ENCODE measurements at regions of chr1 and their contacts with region 1.

Region 1: GRCh38 chr1:236281654-236282424 is at the start of gene ERO1B:
- DNase-seq: peak; percentile 95
- H3K4me3 Mint-ChIP-seq: peak within 1 kb of the TSS; percentile 91
- H3K27ac Mint-ChIP-seq: peak within 1 kb of the TSS; percentile 66
- H3K4me1 Mint-ChIP-seq: peaks cover 41% of the 10 kb centered on the region
- H3K27me3 Mint-ChIP-seq: no peaks in the 10 kb centered on the region
- total RNA-seq, gene ERO1B: 1.6 to 2.5 TPM

Region 2: DNA sequence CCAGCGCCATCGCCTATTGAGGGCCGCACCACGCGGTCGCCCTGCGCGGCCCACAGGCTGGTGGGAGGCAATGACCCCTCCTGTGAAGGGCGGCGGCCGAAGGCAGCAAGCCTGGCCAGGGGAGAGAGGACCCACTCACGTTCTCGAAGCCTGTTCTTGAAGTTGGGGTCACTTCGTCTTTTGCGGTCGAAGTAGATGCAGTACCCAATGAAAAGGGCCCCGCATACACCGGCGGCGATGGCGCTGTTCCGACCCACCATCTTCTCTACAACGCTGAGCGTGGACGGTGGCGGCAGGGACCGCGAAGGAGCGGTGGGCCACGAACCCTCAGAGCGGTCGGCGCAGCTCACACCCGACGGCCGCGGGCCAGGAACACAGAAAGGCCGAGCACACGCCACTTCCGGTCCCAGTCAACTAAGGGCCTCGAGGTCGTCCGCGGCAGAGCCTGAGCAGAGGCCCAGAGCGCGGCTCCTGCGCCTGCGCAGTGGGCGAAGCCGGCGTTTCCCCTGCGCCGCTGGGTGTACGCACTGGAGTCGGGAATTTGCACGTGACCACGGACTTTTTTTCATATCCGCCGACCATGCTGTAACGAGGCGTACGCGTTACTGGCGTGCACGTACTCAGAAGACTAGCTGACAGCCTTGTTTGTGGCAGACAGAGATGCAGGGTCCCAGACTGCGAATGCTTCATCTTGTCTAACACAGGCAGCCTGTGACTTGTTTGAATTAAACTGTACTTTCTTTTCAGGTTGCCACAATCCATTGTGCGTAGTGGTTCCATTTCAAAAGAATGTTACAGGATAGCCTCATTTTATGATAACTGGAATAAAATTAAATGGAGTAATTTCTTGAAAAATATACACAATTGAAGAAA is 1153.1 kb before region 1 on chr1 and contains the start of gene TOMM20:
- CTCF ChIA-PET with region 1: no interaction called
- intact Hi-C with region 1: loop called (anchors 5 kb)
- DNase-seq: peak; percentile 98
- H3K4me3 Mint-ChIP-seq: peak within 1 kb of the TSS; percentile 96
- H3K27ac Mint-ChIP-seq: peak within 1 kb of the TSS; percentile 94
- H3K4me1 Mint-ChIP-seq: peaks cover 38% of the 10 kb centered on the region
- H3K27me3 Mint-ChIP-seq: no peaks in the 10 kb centered on the region
- total RNA-seq, gene TOMM20: 155 to 192 TPM

Region 3: DNA sequence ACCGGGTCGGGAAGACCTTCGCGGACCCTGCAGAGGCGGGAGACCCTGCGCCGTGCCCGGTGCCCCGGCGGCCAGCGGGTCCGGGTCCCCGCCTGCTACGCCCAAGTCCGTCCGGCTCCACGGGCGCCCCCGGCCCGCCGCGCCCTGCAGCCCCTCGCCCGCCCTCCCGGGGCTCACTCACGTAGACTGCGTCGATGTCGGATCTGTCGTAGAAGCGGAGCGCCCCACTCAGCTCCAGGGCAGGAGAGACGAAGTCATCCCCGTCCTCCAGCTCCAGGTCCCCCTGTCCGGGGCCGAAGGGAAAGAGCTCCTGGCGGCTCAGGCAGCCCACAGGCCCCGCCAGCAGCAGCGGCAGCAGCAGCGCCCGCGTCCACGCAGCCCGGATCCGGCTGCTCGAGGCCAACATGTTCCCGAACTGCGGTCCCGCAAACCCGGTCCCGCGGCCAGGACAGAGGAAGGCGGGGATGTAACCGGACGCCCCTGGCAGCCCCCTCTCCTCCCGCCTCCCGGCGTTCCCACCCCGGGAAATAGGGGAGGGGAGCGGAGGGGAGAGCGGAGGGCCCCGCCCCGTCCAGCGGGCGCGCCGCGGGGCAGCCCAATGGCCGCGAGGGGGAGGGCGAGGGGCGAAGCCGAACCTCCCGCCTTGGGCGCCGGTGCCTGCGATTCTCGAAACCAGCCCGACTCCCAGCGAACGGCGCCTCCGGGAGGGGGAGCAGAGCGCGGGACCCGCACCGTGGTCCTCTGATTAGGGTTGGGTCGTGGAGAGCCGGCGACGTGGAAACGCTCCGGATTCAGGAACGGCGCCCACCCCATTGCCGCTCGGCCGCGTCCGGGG is 216.9 kb before region 1 on chr1 and contains the start of gene NID1:
- CTCF ChIA-PET with region 1: no interaction called
- intact Hi-C with region 1: loop called (anchors 1 kb)
- DNase-seq: peak; percentile 25
- H3K4me3 Mint-ChIP-seq: peak within 1 kb of the TSS; percentile 63
- H3K27ac Mint-ChIP-seq: no peak within 1 kb of the TSS
- H3K4me1 Mint-ChIP-seq: peaks cover 26% of the 10 kb centered on the region
- H3K27me3 Mint-ChIP-seq: peaks cover 38% of the 10 kb centered on the region
- total RNA-seq, gene NID1: 0.10 TPM in 1 of 2 experiments, not detected in the other

Region 4: GRCh38 chr1:236120721-236121153 is 161.1 kb before region 1 on chr1:
- CTCF ChIA-PET with region 1: no interaction called
- intact Hi-C with region 1: loop called (anchors 1 kb)
- DNase-seq: peak; percentile 33
- H3K4me3 Mint-ChIP-seq: no peak overlapping the region
- H3K27ac Mint-ChIP-seq: no peak overlapping the region
- H3K4me1 Mint-ChIP-seq: peaks cover 28% of the 10 kb centered on the region
- H3K27me3 Mint-ChIP-seq: no peaks in the 10 kb centered on the region

Region 5: GRCh38 chr1:236214761-236215160 is 67.1 kb before region 1 on chr1:
- CTCF ChIA-PET with region 1: no interaction called
- intact Hi-C with region 1: loop called (anchors 1 kb)
- DNase-seq: peak; percentile 11
- H3K4me3 Mint-ChIP-seq: no peak overlapping the region
- H3K27ac Mint-ChIP-seq: no peak overlapping the region
- H3K4me1 Mint-ChIP-seq: no peaks in the 10 kb centered on the region
- H3K27me3 Mint-ChIP-seq: no peaks in the 10 kb centered on the region

Region 6: DNA sequence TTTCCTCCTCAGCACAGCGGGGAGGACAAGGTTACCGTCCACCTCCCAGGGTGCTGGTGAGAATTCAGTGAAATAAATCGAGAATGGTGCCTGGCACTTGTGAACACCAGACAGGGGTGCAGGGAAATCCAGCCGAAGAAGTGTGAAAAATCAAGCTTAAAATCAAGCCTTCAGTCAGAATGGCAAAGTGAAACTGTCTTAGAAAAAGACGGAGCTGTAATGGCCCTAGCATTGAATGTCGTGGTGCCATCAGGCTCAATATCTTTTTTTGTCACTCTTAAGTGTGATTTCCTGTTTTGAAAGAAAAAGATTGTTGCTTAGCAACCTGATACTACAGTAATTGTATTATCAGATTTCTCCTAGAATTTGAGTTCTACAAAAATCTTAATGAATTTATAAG is 134.3 kb after region 1 on chr1:
- CTCF ChIA-PET with region 1: no interaction called
- intact Hi-C with region 1: loop called (anchors 5 kb)
- DNase-seq: no peak
- H3K4me3 Mint-ChIP-seq: no peak overlapping the region
- H3K27ac Mint-ChIP-seq: peak overlapping the region; percentile 22
- H3K4me1 Mint-ChIP-seq: peaks cover 7% of the 10 kb centered on the region
- H3K27me3 Mint-ChIP-seq: no peaks in the 10 kb centered on the region

Region 7: DNA sequence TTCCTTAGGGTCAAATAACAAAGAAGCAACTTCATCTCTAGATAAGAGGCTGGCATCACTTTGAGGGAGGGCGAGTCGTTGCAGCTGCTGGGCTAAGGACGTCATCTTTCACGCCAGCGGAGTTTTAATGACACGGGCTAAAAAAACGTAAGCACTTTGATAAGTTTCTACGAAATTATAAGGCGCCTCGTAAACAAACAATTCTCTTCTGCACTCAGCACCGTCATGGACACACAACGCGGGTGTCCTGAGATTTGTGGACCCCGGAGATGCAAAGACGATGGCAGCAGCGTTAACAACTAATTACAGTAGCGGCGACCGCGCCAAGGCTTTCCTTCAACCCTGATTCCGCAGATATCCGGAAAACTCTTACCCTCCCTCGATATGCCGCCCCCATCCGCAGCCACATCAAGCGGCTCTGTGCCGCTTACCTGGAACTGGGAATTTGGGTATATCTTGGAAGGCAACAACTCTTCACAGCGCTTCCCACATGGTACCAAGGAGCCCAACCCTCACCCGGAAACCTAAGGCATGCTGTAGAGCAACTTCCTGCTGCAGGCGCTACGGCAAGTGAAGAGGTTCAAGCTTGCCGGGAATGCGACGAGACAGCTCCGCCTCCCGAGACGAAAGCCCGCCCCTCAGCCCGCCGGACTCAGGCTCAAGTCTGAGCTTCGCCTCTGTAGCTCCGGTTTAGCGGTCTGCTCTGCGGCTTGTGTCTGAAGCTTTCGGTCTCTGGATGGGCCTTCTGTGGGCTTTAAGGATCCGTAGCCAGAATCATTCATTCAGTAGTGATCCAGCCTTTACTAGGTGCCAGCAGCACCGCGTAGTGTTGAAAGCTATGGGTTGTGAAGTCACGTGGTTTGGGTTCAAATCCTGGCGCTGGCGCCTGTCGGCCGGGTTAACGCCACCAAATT is 322.4 kb after region 1 on chr1 and contains the start of gene HEATR1:
- CTCF ChIA-PET with region 1: no interaction called
- intact Hi-C with region 1: loop called (anchors 1 kb)
- DNase-seq: peak; percentile 93
- H3K4me3 Mint-ChIP-seq: peak within 1 kb of the TSS; percentile 97
- H3K27ac Mint-ChIP-seq: peak within 1 kb of the TSS; percentile 88
- H3K4me1 Mint-ChIP-seq: peaks cover 31% of the 10 kb centered on the region
- H3K27me3 Mint-ChIP-seq: peaks cover 7% of the 10 kb centered on the region
- total RNA-seq, gene HEATR1: 71.6 to 75.1 TPM

Measured in activated naive CD4-positive, alpha-beta T cell treated with anti-CD3 and anti-CD28 coated beads for 36 hours (primary cell).